ENCODE measurements at regions of chr1 and their contacts with region 1.

Region 1: DNA sequence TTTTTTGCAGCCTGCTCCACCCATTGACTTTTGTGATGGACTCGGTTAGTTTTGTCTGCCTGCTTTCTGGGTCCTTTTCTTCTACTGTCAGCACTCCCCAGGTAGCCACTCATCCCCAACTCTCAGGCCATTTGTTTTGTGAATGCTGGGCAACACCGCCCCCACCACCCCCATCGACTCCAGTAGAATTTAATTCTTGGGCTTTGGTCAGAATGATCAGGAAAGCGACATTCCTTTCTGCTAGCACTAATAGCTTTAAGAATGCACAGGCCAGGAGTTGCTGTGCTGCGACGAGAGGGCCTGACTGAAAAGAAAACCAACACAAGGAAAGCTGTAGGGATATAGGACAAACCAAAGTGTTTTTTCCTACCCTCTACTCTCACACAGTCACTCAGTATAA is 144.4 kb downstream of the CDC7 start:
- DNase-seq: no peak
- H3K4me3 ChIP-seq: no peak overlapping the region
- H3K27ac ChIP-seq: no peak overlapping the region
- H3K4me1 ChIP-seq: no peaks in the 10 kb centered on the region
- H3K27me3 ChIP-seq: no peaks in the 10 kb centered on the region
- CTCF ChIP-seq: no peak
- EP300 ChIP-seq: no peak
- POLR2A ChIP-seq: no peak

Region 2: DNA sequence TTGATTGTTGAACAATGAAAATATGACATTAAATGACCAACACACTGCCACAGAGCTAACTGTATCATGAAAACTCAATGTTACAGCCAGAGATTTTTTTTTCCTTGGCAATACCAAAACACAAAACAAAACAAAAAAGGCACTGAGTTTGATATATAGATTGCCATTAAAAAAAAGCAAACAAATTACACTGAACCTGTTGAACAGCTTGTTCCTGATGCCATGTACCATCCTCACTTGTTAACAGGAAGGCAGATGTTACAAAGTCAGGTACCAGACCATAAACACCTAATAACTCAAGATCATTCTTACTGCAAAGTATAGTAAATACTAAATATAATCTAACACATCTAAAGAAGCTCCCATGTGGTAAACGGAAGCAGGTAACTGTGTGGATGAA is 698.4 kb before region 1 on chr1:
- in situ Hi-C with region 1: no loop called
- intact Hi-C with region 1: loop called (anchors 5 kb)
- DNase-seq: no peak
- H3K4me3 ChIP-seq: no peak overlapping the region
- H3K27ac ChIP-seq: no peak overlapping the region
- H3K4me1 ChIP-seq: peaks cover 0 to 17% (median 7%) of the 10 kb centered on the region in 4 donors
- H3K27me3 ChIP-seq: no peaks in the 10 kb centered on the region
- CTCF ChIP-seq: no peak
- EP300 ChIP-seq: no peak
- POLR2A ChIP-seq: no peak